ENCODE measurements at regions of chr12 and their contacts with region 1.

Region 1: GRCh38 chr12:26088993-26089392 is 35.8 kb downstream of the BHLHE41 start:
- DNase-seq: peak; percentile 58
- ATAC-seq: peak; percentile 71
- H3K4me3 ChIP-seq: no peak overlapping the region
- H3K4me3 Mint-ChIP-seq: no peak overlapping the region
- H3K27ac ChIP-seq: no peak overlapping the region
- H3K27ac Mint-ChIP-seq: no peak overlapping the region
- H3K4me1 ChIP-seq: no peaks in the 10 kb centered on the region
- H3K4me1 Mint-ChIP-seq: peaks cover 5% of the 10 kb centered on the region
- H3K27me3 ChIP-seq: no peaks in the 10 kb centered on the region
- H3K27me3 Mint-ChIP-seq: no peaks in the 10 kb centered on the region
- CTCF ChIP-seq: no peak

Region 2: GRCh38 chr12:26614020-26614616 is 525.1 kb after region 1 on chr12:
- CTCF ChIA-PET with region 1: no interaction called
- POLR2A ChIA-PET with region 1: interaction called, 12 read pairs
- intact Hi-C with region 1: no loop called
- DNase-seq: peak; percentile 51
- ATAC-seq: no peak
- H3K4me3 ChIP-seq: no peak overlapping the region
- H3K4me3 Mint-ChIP-seq: no peak overlapping the region
- H3K27ac ChIP-seq: no peak overlapping the region
- H3K27ac Mint-ChIP-seq: no peak overlapping the region
- H3K4me1 ChIP-seq: no peaks in the 10 kb centered on the region
- H3K4me1 Mint-ChIP-seq: no peaks in the 10 kb centered on the region
- H3K27me3 ChIP-seq: no peaks in the 10 kb centered on the region
- H3K27me3 Mint-ChIP-seq: no peaks in the 10 kb centered on the region
- CTCF ChIP-seq: peak; percentile 58